A549 (cell line): ENCODE measurements at regions of chr19 and their contacts with region 1.

Region 1: GRCh38 chr19:2750808-2751443 is 11.1 kb upstream of the SLC39A3 start:
- DNase-seq: no peak
- ATAC-seq: no peak
- H3K4me3 ChIP-seq: no peak overlapping the region
- H3K27ac ChIP-seq: no peak overlapping the region
- H3K4me1 ChIP-seq: no peaks in the 10 kb centered on the region
- CTCF ChIP-seq: no peak
- EP300 ChIP-seq: no peak
- POLR2A ChIP-seq: no peak
- RAD21 ChIP-seq: no peak

Region 2: GRCh38 chr19:2733930-2734588 is 16.9 kb before region 1 on chr19:
- CTCF ChIA-PET with region 1: interaction called, 16 read pairs
- POLR2A ChIA-PET with region 1: no interaction called
- DNase-seq: no peak
- ATAC-seq: no peak
- H3K4me3 ChIP-seq: no peak overlapping the region
- H3K27ac ChIP-seq: no peak overlapping the region
- H3K4me1 ChIP-seq: 0 out of 3 replicates have a peak, but pooled peaks cover 2% of the 10 kb centered on the region
- CTCF ChIP-seq: no peak
- EP300 ChIP-seq: no peak
- POLR2A ChIP-seq: no peak
- RAD21 ChIP-seq: no peak

Region 3: GRCh38 chr19:2739602-2740313 is 11.2 kb before region 1 on chr19 and contains the start of gene SLC39A3:
- CTCF ChIA-PET with region 1: interaction called, 16 read pairs
- POLR2A ChIA-PET with region 1: no interaction called
- DNase-seq: peak; percentile 97 to 99
- ATAC-seq: peak; percentile 99 to 100
- H3K4me3 ChIP-seq: peak within 1 kb of the TSS; percentile 91
- H3K27ac ChIP-seq: peak within 1 kb of the TSS; percentile 74 to 96
- H3K4me1 ChIP-seq: 0 out of 3 replicates have a peak, but pooled peaks cover 3% of the 10 kb centered on the region
- CTCF ChIP-seq: no peak
- EP300 ChIP-seq: no peak
- POLR2A ChIP-seq: peak; percentile 48
- RAD21 ChIP-seq: no peak
- polyA plus RNA-seq, gene SLC39A3: 29.6 and 38.1 TPM in 2 replicates

Region 4: GRCh38 chr19:2841801-2842574 is 91.1 kb after region 1 on chr19:
- CTCF ChIA-PET with region 1: no interaction called
- POLR2A ChIA-PET with region 1: no interaction called
- DNase-seq: no peak
- ATAC-seq: peak in 1 of 2 experiments; percentile 30; a peak in 1 of 6 replicates
- H3K4me3 ChIP-seq: peak overlapping the region; percentile 88
- H3K27ac ChIP-seq: peak overlapping the region; percentile 83 to 96
- H3K4me1 ChIP-seq: no peaks in the 10 kb centered on the region
- CTCF ChIP-seq: no peak; the same call in 2 of the 3 replicates
- EP300 ChIP-seq: no peak
- POLR2A ChIP-seq: no peak
- RAD21 ChIP-seq: no peak